Calu3 (cell line): ENCODE measurements at regions of chr3 and their contacts with region 1.

Region 1: DNA sequence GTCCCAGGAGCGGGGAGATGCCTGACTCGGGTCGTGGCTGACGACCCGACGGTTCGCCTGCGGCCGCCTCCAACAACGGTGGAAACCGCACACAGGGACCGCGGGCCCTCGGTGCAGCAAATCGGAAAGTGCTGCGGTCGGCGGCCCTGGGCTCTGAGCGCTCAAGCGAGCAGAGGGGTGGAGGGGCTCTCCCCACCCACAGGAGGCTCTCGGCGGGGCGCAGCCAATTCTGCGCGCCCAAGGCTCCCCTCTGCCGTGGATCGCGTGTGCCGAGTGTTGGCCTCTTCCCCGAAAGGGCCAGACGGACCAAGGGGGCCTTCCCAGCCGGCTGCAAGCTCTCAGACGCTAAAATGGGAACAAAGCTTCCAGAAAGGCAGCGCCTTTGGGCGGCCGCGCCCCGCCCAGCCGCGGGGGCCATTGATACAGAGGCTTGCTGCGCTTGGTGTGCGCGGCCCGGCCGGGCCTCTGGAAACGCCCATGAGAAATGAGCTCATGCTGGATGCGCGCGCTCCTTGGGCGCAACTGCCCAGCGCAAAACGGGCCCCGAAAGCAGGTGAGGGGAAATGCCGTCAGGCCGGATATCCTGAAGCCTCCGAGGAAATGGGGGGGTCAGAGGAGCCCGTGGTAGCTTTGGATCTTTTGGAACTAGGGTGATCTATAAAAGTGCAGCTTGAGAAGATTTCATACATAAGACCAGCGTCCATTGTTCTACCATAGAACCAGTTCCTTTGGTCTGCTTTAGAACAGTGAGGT is 1.2 kb upstream of the GSK3B start:
- DNase-seq: peak; percentile 89
- H3K4me3 Mint-ChIP-seq: no peak overlapping the region
- H3K27ac Mint-ChIP-seq: no peak overlapping the region
- H3K4me1 Mint-ChIP-seq: peaks cover 18% of the 10 kb centered on the region
- H3K27me3 Mint-ChIP-seq: no peaks in the 10 kb centered on the region
- CTCF ChIP-seq: no peak

Region 2: DNA sequence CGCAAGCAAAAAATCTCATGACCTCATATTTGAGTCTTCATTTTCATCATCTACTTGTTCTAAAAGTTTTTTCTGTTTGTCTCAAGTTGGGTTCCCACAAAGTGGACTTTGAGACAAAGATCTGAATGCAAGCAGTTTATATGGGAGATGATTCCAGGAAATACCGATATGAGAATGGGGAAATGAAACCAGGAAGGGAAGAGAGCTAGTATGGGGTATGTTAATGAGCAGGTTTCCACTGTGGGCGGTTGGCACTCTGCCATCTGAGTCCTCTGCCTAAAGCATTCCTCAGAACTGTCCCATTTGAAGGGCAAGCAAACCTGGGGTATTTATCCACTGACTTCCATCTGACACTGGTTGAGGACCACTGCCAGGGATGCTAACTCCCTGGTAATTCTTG is 507.3 kb before region 1 on chr3:
- CTCF ChIA-PET with region 1: no interaction called
- intact Hi-C with region 1: no loop called
- DNase-seq: peak; percentile 16
- H3K4me3 Mint-ChIP-seq: no peak overlapping the region
- H3K27ac Mint-ChIP-seq: no peak overlapping the region
- H3K4me1 Mint-ChIP-seq: no peaks in the 10 kb centered on the region
- H3K27me3 Mint-ChIP-seq: peaks cover 24% of the 10 kb centered on the region
- CTCF ChIP-seq: no peak

Region 3: GRCh38 chr3:119891944-119892721 is 203.3 kb before region 1 on chr3:
- CTCF ChIA-PET with region 1: interaction called, 3 read pairs
- intact Hi-C with region 1: loop called (anchors 5 kb)
- DNase-seq: peak; percentile 60
- H3K4me3 Mint-ChIP-seq: no peak overlapping the region
- H3K27ac Mint-ChIP-seq: no peak overlapping the region
- H3K4me1 Mint-ChIP-seq: peaks cover 17% of the 10 kb centered on the region
- H3K27me3 Mint-ChIP-seq: no peaks in the 10 kb centered on the region
- CTCF ChIP-seq: peak; percentile 31

Region 4: DNA sequence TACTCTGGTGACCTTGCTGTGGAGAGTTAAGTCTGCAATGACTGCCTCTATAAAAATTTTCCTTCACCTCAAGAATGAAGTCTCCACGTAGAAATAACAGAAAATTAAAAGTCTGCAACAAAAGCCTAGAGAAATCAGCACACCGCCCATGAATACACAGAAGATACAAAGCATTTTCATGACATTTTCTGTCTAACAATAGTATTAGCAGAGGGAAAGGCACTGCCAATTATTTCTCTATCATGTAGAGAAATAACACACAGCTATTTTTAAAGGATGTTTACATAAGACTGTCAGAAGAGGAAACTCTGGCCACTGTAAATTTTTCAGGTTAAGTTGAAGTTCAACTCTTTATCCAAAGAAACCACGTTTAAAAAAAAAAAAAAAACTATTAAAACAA is 81.9 kb before region 1 on chr3:
- CTCF ChIA-PET with region 1: no interaction called
- intact Hi-C with region 1: loop called (anchors 5 kb)
- DNase-seq: no peak
- H3K4me3 Mint-ChIP-seq: no peak overlapping the region
- H3K27ac Mint-ChIP-seq: no peak overlapping the region
- H3K4me1 Mint-ChIP-seq: peaks cover 13% of the 10 kb centered on the region
- H3K27me3 Mint-ChIP-seq: no peaks in the 10 kb centered on the region
- CTCF ChIP-seq: no peak

Region 5: GRCh38 chr3:120129718-120130513 is 34.5 kb after region 1 on chr3:
- CTCF ChIA-PET with region 1: no interaction called
- intact Hi-C with region 1: loop called (anchors 2 kb)
- DNase-seq: no peak
- H3K4me3 Mint-ChIP-seq: no peak overlapping the region
- H3K27ac Mint-ChIP-seq: no peak overlapping the region
- H3K4me1 Mint-ChIP-seq: no peaks in the 10 kb centered on the region
- H3K27me3 Mint-ChIP-seq: no peaks in the 10 kb centered on the region
- CTCF ChIP-seq: no peak

Region 6: GRCh38 chr3:120147072-120147871 is 51.9 kb after region 1 on chr3:
- CTCF ChIA-PET with region 1: interaction called, 7 read pairs
- intact Hi-C with region 1: loop called (anchors 2 kb)
- DNase-seq: peak; percentile 57
- H3K4me3 Mint-ChIP-seq: no peak overlapping the region
- H3K27ac Mint-ChIP-seq: peak overlapping the region; percentile 70
- H3K4me1 Mint-ChIP-seq: peaks cover 58% of the 10 kb centered on the region
- H3K27me3 Mint-ChIP-seq: no peaks in the 10 kb centered on the region
- CTCF ChIP-seq: no peak

Region 7: GRCh38 chr3:120160050-120160449 is 64.6 kb after region 1 on chr3:
- CTCF ChIA-PET with region 1: interaction called, 11 read pairs
- intact Hi-C with region 1: loop called (anchors 5 kb)
- DNase-seq: peak; percentile 76
- H3K4me3 Mint-ChIP-seq: no peak overlapping the region
- H3K27ac Mint-ChIP-seq: peak overlapping the region; percentile 90
- H3K4me1 Mint-ChIP-seq: peaks cover 63% of the 10 kb centered on the region
- H3K27me3 Mint-ChIP-seq: no peaks in the 10 kb centered on the region
- CTCF ChIP-seq: no peak

Region 8: DNA sequence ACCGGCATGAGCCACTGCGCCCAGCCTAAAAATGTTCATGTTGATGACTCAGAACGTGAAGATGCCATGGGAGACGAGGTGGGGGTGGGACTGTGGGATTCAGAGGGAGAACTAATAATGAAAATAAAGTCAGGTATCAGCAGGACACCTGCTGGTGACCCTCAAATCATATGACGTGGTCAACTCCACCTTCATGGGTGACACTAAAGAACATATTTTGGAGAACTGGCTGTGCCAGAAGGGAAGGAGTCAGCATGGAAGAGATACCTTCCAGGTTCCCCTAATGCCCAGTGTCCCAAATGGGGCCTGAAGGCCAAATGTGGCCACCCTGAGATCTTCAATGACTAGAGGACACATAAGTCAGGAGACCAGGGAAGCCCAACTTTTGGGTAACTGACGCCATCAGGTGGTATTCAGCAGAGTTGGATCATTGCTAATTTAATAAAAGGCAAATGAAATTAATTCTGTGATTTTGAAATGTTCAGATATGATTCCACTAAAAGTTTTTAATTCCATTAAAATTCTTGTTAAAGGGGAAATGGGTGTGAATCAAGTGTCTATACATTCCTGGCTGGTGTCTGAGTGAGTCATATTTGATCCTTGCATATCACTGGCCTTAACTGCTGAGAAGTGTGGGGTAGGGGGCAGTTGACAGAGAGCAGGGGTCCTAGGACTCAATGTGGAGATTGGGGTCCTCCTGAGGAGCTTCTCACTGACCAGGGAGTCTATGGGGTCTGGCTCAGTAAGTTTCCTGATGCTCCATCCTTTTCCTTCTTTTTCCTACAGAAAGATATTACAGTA is 87.5 kb after region 1 on chr3:
- CTCF ChIA-PET with region 1: interaction called, 5 read pairs
- intact Hi-C with region 1: loop called (anchors 5 kb)
- DNase-seq: peak; percentile 40
- H3K4me3 Mint-ChIP-seq: no peak overlapping the region
- H3K27ac Mint-ChIP-seq: no peak overlapping the region
- H3K4me1 Mint-ChIP-seq: peaks cover 25% of the 10 kb centered on the region
- H3K27me3 Mint-ChIP-seq: no peaks in the 10 kb centered on the region
- CTCF ChIP-seq: no peak